CD4-positive, alpha-beta T cell (primary cell): ENCODE measurements at regions of chr1 and their contacts with region 1.

Region 1: DNA sequence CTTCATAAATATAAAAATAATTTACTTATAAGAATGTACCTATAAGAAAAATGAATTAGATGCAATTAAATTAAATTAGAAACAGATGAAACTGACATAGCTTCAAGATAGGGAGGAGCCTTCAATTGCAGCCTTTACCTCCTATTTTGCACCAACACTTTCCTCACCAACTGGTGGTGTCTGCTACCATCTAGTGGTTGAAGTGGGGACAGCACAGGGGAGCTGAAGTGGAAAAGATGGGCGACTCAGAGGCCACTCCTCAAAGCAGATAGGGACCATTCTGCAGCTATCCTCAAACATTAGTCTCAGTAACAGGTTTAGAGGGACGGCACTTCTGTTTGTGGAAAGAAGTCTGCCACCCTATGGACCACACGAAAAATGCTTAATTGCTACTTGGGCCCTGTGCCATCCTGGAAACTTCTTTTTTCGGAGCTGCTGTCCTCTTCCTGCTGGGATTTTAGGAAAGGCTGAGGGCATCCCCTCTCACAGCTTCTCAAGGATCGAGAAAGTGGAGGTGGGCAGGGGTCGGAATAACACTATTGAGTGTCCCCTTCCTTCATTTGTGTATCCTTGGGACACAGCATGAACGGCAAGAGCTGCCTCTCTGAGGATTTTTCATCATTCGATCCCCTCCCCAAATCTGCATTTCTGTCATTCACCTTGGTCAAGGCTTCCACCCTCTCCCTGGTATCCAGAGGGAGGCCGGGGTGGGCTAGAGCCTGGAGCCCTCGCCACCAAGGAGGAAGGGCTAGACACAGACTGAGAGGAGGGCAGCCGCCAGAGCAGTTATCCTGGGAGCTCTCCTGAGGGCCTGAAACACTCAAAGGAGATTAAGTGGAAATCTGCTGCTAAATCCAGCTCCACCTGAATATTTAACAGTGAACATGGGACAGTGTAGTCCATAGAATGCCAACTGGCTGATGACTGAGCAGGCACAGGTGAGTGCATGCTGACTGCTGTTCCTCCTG is 9.6 kb downstream of the PROK1 start:
- DNase-seq: peak; percentile 72 to 89 (median 82)
- ATAC-seq: peak; percentile 99
- H3K4me3 ChIP-seq: no peak overlapping the region
- H3K4me3 Mint-ChIP-seq: no peak overlapping the region
- H3K27ac ChIP-seq: no peak overlapping the region
- H3K27ac Mint-ChIP-seq: no peak overlapping the region
- H3K4me1 ChIP-seq: no peaks in the 10 kb centered on the region
- H3K4me1 Mint-ChIP-seq: no peaks in the 10 kb centered on the region
- H3K27me3 ChIP-seq: peaks cover 0 to under 1% of the 10 kb centered on the region in 2 experiments
- H3K27me3 Mint-ChIP-seq: no peaks in the 10 kb centered on the region
- CTCF ChIP-seq: peak; percentile 95

Region 2: GRCh38 chr1:110024613-110025012 is 435.9 kb before region 1 on chr1:
- CTCF ChIA-PET with region 1: interaction called, 6 read pairs
- POLR2A ChIA-PET with region 1: interaction called, 3 read pairs
- intact Hi-C with region 1: loop called in 1 of 2 experiments (anchors 5 kb)
- DNase-seq: no peak
- ATAC-seq: no peak
- H3K4me3 ChIP-seq: no peak overlapping the region
- H3K4me3 Mint-ChIP-seq: no peak overlapping the region
- H3K27ac ChIP-seq: no peak overlapping the region
- H3K27ac Mint-ChIP-seq: no peak overlapping the region
- H3K4me1 ChIP-seq: peaks cover 3% of the 10 kb centered on the region
- H3K4me1 Mint-ChIP-seq: peaks cover 2% of the 10 kb centered on the region
- H3K27me3 ChIP-seq: no peaks in the 10 kb centered on the region
- H3K27me3 Mint-ChIP-seq: no peaks in the 10 kb centered on the region
- CTCF ChIP-seq: no peak

Region 3: DNA sequence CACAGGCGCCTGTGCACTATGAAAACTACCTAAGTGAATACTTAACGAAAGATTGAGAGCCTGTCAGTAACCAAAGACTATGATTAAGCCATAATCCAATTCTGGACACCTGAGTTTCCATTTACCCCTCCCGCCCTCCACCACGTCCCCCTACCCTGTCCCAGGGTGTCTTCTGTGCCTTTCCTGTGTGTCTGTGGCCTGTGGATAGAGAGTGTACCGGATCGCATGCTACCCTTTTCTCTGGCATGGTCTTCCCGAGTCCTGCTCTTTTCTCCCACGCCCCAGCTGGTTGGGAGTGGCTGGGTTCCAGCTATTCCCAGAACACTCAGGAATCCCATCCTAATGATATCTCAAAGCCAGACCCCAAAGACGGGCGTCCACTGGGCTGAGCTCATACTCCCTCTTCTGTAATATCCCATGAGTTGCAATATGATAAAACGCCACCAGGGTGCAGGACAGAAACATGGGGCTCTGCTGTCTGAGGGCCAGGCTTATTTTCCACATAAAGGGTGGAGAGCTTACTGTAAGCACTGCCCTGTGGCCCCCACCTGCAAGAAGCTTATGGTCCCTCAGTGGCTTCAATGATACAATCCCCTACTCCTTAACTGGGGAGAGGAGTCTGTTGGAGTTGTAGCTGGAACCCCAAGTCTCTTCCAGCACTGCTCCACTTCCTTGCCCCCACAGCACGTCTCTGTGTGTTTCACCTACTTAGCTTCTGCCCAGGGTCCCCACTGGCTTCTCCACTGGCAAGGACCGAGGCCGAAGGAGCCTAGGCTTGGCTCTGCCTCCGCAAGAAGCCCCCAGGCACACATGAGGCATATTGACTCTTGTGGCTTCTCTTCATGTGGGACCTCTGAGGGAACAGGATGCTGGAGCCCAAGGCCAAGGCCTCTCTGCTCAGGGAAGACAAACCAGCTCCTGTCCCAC is 372.5 kb before region 1 on chr1:
- CTCF ChIA-PET with region 1: interaction called, 8 read pairs
- POLR2A ChIA-PET with region 1: no interaction called
- intact Hi-C with region 1: loop called in 1 of 2 experiments (anchors 5 kb)
- DNase-seq: peak in 9 of 14 experiments; percentile 18 to 70 (median 33)
- ATAC-seq: peak; percentile 73
- H3K4me3 ChIP-seq: no peak overlapping the region
- H3K4me3 Mint-ChIP-seq: peak overlapping the region; percentile 36
- H3K27ac ChIP-seq: no peak overlapping the region
- H3K27ac Mint-ChIP-seq: no peak overlapping the region
- H3K4me1 ChIP-seq: peaks cover 19% of the 10 kb centered on the region
- H3K4me1 Mint-ChIP-seq: peaks cover 6% of the 10 kb centered on the region
- H3K27me3 ChIP-seq: peaks cover 26 to 32% of the 10 kb centered on the region in 2 experiments
- H3K27me3 Mint-ChIP-seq: peaks cover 53% of the 10 kb centered on the region
- CTCF ChIP-seq: peak; percentile 60

Region 4: GRCh38 chr1:110203021-110203661 is 257.4 kb before region 1 on chr1:
- CTCF ChIA-PET with region 1: interaction called, 39 read pairs
- POLR2A ChIA-PET with region 1: interaction called, 18 read pairs
- intact Hi-C with region 1: loop called (anchors 1 kb)
- DNase-seq: peak; percentile 22 to 88 (median 60)
- ATAC-seq: peak; percentile 76
- H3K4me3 ChIP-seq: no peak overlapping the region
- H3K4me3 Mint-ChIP-seq: no peak overlapping the region
- H3K27ac ChIP-seq: peak overlapping the region in 1 of 2 donors; percentile 30
- H3K27ac Mint-ChIP-seq: peak overlapping the region; percentile 90
- H3K4me1 ChIP-seq: peaks cover 24% of the 10 kb centered on the region
- H3K4me1 Mint-ChIP-seq: peaks cover 36% of the 10 kb centered on the region
- H3K27me3 ChIP-seq: no peaks in the 10 kb centered on the region
- H3K27me3 Mint-ChIP-seq: no peaks in the 10 kb centered on the region
- CTCF ChIP-seq: peak; percentile 78

Region 5: DNA sequence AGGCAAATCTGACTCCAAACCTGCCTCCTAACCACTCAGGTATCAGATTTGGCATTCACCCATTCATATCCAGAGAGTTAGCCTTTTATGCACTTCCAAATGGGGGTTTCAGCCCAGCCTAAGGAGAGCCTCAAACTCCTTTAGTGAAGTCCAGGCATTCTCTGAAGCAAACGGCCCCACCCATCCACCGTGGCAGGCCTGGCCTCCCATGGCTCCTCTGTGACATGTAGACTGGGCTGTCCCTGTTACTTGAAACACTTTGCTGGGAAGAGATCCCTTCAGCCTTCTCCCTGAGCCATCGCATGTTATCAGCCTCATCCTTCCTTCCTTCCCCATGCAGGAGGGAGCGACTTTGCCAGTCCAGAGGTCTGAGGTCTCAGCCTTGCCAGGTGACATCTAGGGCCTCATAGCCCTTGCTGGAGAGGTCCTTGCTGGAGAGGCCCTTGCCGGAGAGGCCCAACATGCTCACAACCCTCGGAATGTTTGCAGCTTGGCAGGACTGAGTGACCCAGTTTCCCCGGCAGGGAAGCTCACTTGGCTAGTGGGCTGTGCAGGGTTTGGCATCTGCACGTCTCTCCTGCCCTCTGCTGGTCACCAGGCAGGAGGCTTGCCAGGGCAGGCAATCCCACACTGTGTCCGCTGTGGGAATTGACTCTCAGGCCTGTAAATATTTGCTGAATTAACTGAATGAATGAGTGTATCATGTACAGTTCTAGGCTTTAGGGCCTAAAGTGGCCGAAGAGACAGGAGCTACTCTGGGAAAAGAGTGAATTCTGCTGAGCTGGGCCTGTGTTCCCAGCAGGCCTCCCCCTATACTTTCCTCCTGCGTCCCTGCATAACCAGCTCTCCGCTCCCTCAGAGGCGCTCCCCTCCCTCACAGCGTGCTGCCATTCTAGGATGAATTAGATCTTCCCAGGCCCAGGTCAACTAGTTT is 148.1 kb before region 1 on chr1:
- CTCF ChIA-PET with region 1: interaction called, 9 read pairs
- POLR2A ChIA-PET with region 1: no interaction called
- intact Hi-C with region 1: loop called (anchors 1 to 2 kb)
- DNase-seq: peak; percentile 62 to 86 (median 70)
- ATAC-seq: peak; percentile 99
- H3K4me3 ChIP-seq: no peak overlapping the region
- H3K4me3 Mint-ChIP-seq: no peak overlapping the region
- H3K27ac ChIP-seq: no peak overlapping the region
- H3K27ac Mint-ChIP-seq: no peak overlapping the region
- H3K4me1 ChIP-seq: peaks cover 7% of the 10 kb centered on the region
- H3K4me1 Mint-ChIP-seq: no peaks in the 10 kb centered on the region
- H3K27me3 ChIP-seq: no peaks in the 10 kb centered on the region
- H3K27me3 Mint-ChIP-seq: no peaks in the 10 kb centered on the region
- CTCF ChIP-seq: peak; percentile 92

Region 6: DNA sequence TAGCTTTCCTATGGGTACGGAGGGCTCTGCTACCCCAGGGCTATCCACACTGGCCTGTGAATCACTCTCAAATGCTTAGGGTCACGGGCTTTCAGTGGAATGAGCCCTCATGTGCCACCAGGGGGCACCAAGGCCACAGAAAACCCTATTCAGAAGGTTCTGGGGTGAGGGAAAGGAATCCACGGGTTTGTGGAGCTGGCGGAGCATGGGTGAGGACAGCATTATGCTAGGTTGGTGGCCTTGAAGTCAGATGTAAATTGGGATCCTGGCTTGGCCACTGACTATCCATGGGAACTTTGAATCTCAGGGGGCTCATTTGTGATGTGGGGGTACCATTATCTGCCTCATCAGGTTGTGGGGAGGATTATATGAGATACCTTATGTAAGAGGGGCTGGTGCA is 48.0 kb before region 1 on chr1:
- CTCF ChIA-PET with region 1: interaction called, 33 read pairs
- POLR2A ChIA-PET with region 1: interaction called, 5 read pairs
- intact Hi-C with region 1: loop called (anchors 1 to 2 kb)
- DNase-seq: peak; percentile 24 to 81 (median 52)
- ATAC-seq: peak; percentile 57
- H3K4me3 ChIP-seq: no peak overlapping the region
- H3K4me3 Mint-ChIP-seq: no peak overlapping the region
- H3K27ac ChIP-seq: no peak overlapping the region
- H3K27ac Mint-ChIP-seq: no peak overlapping the region
- H3K4me1 ChIP-seq: peaks cover 15% of the 10 kb centered on the region
- H3K4me1 Mint-ChIP-seq: peaks cover 18% of the 10 kb centered on the region
- H3K27me3 ChIP-seq: no peaks in the 10 kb centered on the region
- H3K27me3 Mint-ChIP-seq: no peaks in the 10 kb centered on the region
- CTCF ChIP-seq: peak; percentile 77

Region 7: DNA sequence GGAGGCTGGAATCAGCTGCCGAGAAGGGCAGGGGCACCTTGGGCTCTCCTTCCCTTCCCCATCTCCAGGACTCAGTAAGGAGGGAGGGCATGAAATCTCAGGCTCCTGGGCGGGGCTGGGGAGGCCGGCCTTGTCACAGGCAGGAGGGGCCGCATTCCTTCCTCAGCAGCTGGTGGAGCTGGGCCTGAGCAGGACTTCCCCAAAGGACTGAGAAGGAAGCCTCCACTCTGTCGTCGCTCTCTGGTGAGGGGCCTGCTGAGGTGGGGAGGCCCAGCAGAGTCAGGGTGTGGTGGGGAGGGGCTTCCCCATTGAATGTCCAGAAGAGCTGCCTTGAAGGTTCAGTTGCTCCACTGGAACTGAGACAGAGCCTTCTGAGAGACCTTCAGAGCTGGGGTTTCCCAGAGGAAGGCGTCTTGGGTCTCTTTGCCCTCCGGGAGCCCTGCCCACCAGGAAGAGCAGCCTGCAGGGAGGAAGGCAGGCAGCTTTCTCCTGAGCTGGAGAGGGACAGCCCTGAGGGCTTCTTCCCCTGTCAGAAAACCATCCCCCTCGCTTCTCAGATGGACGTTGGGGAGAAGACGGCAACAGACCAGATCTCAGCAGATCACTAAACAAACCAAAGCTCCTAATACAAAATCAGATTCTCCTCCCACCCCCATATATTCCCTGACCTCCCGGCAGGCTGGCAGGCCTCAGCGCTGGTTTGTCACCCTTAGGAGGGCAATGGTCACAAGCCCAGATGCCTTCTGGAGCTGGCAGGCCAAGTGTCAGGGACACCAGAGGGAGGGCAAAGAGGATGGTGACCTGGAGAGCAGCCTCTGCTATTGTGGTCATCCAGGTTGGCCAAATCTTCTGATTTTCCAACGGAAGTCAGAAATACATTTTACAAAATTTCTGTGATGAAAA is 47.8 kb after region 1 on chr1:
- CTCF ChIA-PET with region 1: no interaction called
- POLR2A ChIA-PET with region 1: no interaction called
- intact Hi-C with region 1: no loop called
- DNase-seq: peak in 2 of 14 experiments; percentile 29 to 38
- ATAC-seq: no peak
- H3K4me3 ChIP-seq: no peak overlapping the region
- H3K4me3 Mint-ChIP-seq: no peak overlapping the region
- H3K27ac ChIP-seq: no peak overlapping the region
- H3K27ac Mint-ChIP-seq: no peak overlapping the region
- H3K4me1 ChIP-seq: no peaks in the 10 kb centered on the region
- H3K4me1 Mint-ChIP-seq: no peaks in the 10 kb centered on the region
- H3K27me3 ChIP-seq: no peaks in the 10 kb centered on the region
- H3K27me3 Mint-ChIP-seq: peaks cover 2% of the 10 kb centered on the region
- CTCF ChIP-seq: no peak

Region 8: DNA sequence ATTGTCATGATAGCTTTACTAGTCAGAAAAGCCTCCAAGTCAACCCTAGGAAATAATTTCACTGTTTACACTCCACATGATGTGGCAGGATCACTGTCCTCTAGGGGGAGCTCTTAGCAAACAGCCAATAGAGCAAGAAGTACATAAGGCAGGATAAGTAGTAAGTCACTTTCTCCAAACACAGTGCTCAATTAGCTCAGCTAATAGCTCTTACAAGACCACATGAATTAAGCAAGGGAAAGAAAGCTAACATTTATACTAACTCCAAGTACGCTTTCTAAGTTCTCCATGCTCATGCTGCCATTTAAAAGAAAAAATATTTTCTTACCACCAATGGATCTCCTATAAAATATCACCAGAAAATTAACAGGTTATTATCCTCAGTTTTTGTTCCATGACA is 570.1 kb after region 1 on chr1:
- CTCF ChIA-PET with region 1: no interaction called
- POLR2A ChIA-PET with region 1: no interaction called
- intact Hi-C with region 1: no loop called
- DNase-seq: peak in 13 of 14 experiments; percentile 7 to 79 (median 29)
- ATAC-seq: no peak
- H3K4me3 ChIP-seq: no peak overlapping the region
- H3K4me3 Mint-ChIP-seq: no peak overlapping the region
- H3K27ac ChIP-seq: no peak overlapping the region
- H3K27ac Mint-ChIP-seq: no peak overlapping the region
- H3K4me1 ChIP-seq: no peaks in the 10 kb centered on the region
- H3K4me1 Mint-ChIP-seq: peaks cover 5% of the 10 kb centered on the region
- H3K27me3 ChIP-seq: no peaks in the 10 kb centered on the region
- H3K27me3 Mint-ChIP-seq: peaks cover 17% of the 10 kb centered on the region
- CTCF ChIP-seq: peak; percentile 96